ENCODE measurements at regions of chr7 and their contacts with region 1.

Region 1: DNA sequence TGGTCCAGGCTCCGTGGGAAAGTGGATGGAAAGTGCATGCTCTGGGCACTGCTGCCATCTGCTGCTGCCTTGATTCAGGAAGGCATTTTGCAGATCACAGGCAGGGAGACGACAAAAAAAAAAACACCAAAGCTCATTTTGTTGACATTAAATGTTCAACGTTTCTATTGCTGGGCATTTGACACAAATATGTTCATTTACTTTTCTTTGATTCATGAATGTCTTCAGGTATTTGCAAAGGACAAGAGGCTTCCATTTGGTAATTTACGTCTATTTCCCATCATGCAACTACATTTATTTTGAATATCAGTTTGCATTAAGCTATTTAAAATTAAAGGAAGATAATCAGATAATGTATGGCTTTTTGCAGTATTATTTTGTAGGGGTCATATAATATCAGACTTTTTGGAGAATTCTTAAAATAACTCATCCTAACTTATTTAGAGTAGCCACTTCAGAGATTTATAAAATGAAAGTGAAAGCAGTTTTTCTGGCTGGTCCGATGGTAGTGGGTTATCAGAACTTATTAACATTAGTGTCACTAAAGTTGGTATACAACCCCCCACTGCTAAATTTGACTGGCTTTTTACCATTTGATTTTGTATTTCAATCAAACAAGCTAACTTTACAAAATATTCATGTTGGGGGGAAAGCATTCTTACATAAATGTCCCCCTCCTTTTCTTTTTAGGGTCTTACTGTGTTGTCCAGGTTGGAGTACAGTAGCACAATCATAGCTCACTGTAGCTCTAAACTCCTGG is 65.3 kb downstream of the PDIA4 start:
- DNase-seq: peak; percentile 68
- ATAC-seq: peak; percentile 75 to 88
- H3K4me3 ChIP-seq: peak overlapping the region; percentile 64
- H3K27ac ChIP-seq: peak overlapping the region; percentile 75
- H3K4me1 ChIP-seq: peaks cover 19% of the 10 kb centered on the region
- H3K27me3 ChIP-seq: no peaks in the 10 kb centered on the region
- CTCF ChIP-seq: peak; percentile 74

Region 2: DNA sequence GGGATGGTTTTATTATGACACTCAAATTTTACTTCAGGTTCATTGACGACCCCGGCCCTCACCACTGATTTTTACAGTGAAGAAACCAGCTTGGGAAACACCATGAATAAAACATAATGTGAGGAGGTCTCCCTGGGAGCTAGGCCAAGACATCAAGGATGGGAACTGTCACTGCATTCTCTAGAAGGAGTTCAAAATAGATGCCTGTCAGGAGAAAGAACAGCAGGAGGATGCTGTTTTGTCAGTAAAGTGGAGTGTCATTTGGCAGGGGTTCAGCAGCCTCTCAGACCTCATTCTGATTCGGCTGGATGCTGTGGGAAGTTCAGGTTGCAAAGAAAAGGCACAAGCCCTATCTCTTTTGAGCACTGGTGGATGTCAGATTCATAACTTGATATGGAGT is 732.7 kb before region 1 on chr7:
- intact Hi-C with region 1: no loop called
- DNase-seq: no peak
- ATAC-seq: no peak
- H3K4me3 ChIP-seq: no peak overlapping the region
- H3K27ac ChIP-seq: no peak overlapping the region
- H3K4me1 ChIP-seq: no peaks in the 10 kb centered on the region
- H3K27me3 ChIP-seq: no peaks in the 10 kb centered on the region
- CTCF ChIP-seq: no peak

Region 3: DNA sequence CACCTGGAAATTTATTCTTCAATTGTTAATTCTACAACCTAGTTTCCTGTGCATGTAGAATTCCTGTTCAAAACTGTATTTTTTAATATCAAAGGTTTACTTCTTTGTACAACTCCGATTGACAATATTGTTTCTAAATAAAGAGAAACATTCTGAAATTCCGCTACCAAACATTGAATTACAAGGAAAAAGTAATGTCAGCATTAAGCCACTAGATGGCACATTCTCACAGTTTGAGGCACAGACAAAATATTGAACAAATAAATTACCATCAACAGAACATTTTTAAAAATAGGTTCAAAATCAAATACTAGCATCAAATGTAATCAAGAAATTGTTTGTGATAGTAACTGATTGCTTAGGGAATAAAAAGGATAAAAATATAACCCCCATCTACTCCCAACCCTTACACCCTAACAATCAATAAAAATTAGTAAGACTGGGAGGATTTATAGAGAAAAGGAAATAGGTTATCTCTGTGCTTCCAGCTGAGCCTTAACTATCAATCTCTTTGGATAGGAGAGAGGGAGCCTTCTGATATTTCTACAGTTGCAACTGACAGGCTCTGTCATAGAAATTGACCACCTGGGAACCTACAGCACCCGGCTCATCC is 459.0 kb before region 1 on chr7:
- intact Hi-C with region 1: loop called (anchors 10 kb)
- DNase-seq: no peak
- ATAC-seq: no peak
- H3K4me3 ChIP-seq: no peak overlapping the region
- H3K27ac ChIP-seq: no peak overlapping the region
- H3K4me1 ChIP-seq: no peaks in the 10 kb centered on the region
- H3K27me3 ChIP-seq: peaks cover 19% of the 10 kb centered on the region
- CTCF ChIP-seq: peak; percentile 79

Region 4: GRCh38 chr7:148575640-148576411 is 387.2 kb before region 1 on chr7:
- intact Hi-C with region 1: loop called (anchors 10 kb)
- DNase-seq: peak; percentile 80
- ATAC-seq: peak; percentile 86 to 89
- H3K4me3 ChIP-seq: no peak overlapping the region
- H3K27ac ChIP-seq: no peak overlapping the region
- H3K4me1 ChIP-seq: no peaks in the 10 kb centered on the region
- H3K27me3 ChIP-seq: no peaks in the 10 kb centered on the region
- CTCF ChIP-seq: peak; percentile 90

Measured in lower lobe of right lung (tissue), 2 donors.